Activated naive CD4-positive, alpha-beta T cell treated with anti-CD3 and anti-CD28 coated beads for 36 hours (primary cell): ENCODE measurements at regions of chr1 and their contacts with region 1.

Region 1: GRCh38 chr1:78004719-78005447 is at the start of gene DNAJB4:
- DNase-seq: peak; percentile 82
- H3K4me3 Mint-ChIP-seq: peak within 1 kb of the TSS; percentile 88
- H3K27ac Mint-ChIP-seq: peak within 1 kb of the TSS; percentile 100
- H3K4me1 Mint-ChIP-seq: peaks cover 39% of the 10 kb centered on the region
- H3K27me3 Mint-ChIP-seq: peaks cover 3% of the 10 kb centered on the region
- total RNA-seq, gene DNAJB4: 9.7 to 10.4 TPM

Region 2: GRCh38 chr1:77430966-77431690 is 573.8 kb before region 1 on chr1:
- CTCF ChIA-PET with region 1: no interaction called
- intact Hi-C with region 1: loop called (anchors 2 kb)
- DNase-seq: no peak
- H3K4me3 Mint-ChIP-seq: no peak overlapping the region
- H3K27ac Mint-ChIP-seq: no peak overlapping the region
- H3K4me1 Mint-ChIP-seq: peaks cover 28% of the 10 kb centered on the region
- H3K27me3 Mint-ChIP-seq: no peaks in the 10 kb centered on the region

Region 3: GRCh38 chr1:77779529-77780281 is 225.2 kb before region 1 on chr1 and contains the start of gene MIGA1:
- CTCF ChIA-PET with region 1: no interaction called
- intact Hi-C with region 1: loop called (anchors 1 kb)
- DNase-seq: peak; percentile 90
- H3K4me3 Mint-ChIP-seq: peak within 1 kb of the TSS; percentile 88
- H3K27ac Mint-ChIP-seq: peak within 1 kb of the TSS; percentile 85
- H3K4me1 Mint-ChIP-seq: peaks cover 34% of the 10 kb centered on the region
- H3K27me3 Mint-ChIP-seq: no peaks in the 10 kb centered on the region
- total RNA-seq, gene MIGA1: 7.7 to 8.8 TPM

Region 4: DNA sequence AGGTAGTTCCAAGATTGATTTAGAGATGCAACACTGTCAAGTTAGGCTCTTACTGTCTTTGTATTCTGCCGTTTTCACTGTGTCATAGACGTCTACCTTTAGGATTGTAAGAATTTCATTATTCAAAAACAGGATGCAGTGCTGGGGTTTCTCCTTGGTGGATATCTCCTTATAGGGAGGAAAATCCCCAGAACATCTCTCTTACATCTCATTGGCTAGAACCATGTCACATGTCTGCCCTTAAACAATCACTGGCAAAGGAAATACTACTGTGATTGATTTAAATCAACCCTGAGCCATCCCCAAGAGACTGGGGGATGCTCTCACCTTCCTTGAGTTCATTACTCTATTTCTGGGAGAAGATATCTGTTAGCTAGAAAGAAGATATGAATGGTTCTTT is 15.1 kb before region 1 on chr1:
- CTCF ChIA-PET with region 1: no interaction called
- intact Hi-C with region 1: no loop called
- DNase-seq: no peak
- H3K4me3 Mint-ChIP-seq: no peak overlapping the region
- H3K27ac Mint-ChIP-seq: no peak overlapping the region
- H3K4me1 Mint-ChIP-seq: peaks cover 39% of the 10 kb centered on the region
- H3K27me3 Mint-ChIP-seq: no peaks in the 10 kb centered on the region

Region 5: DNA sequence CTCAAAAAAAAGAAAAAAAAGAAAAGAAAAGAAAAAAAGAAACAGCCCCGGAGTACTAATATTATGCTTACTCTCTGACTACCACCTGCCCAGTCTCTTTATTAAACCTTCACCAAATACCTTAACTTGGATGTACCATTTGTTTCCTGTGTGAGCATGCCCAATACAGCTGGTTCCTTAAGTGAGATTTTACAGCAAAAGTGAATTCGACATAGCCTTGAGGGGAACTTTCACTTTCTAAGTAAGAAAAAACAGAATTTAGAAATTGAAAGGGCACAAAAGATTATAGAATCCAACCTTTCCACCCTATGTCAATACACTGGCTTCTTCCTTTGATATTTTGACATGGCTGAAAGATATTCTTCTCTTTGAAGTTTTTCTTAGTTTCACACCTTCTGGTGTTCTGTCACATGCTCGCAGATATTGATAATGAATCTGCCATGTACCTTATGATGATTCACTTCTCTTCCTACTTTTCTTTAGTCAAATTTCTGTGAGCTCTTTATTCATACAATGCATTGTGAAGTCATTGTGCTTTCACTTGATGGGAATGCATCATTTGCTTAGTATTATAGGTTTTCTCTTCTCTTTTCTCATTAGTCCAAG is 35.7 kb after region 1 on chr1:
- CTCF ChIA-PET with region 1: interaction called, 5 read pairs
- intact Hi-C with region 1: loop called (anchors 1 kb)
- DNase-seq: no peak
- H3K4me3 Mint-ChIP-seq: peak overlapping the region; percentile 57
- H3K27ac Mint-ChIP-seq: peak overlapping the region; percentile 32
- H3K4me1 Mint-ChIP-seq: peaks cover 27% of the 10 kb centered on the region
- H3K27me3 Mint-ChIP-seq: peaks cover 15% of the 10 kb centered on the region

Region 6: GRCh38 chr1:78081980-78082860 is 77.3 kb after region 1 on chr1:
- CTCF ChIA-PET with region 1: no interaction called
- intact Hi-C with region 1: loop called (anchors 1 kb)
- DNase-seq: no peak
- H3K4me3 Mint-ChIP-seq: no peak overlapping the region
- H3K27ac Mint-ChIP-seq: no peak overlapping the region
- H3K4me1 Mint-ChIP-seq: peaks cover 16% of the 10 kb centered on the region
- H3K27me3 Mint-ChIP-seq: peaks cover 4% of the 10 kb centered on the region

Region 7: DNA sequence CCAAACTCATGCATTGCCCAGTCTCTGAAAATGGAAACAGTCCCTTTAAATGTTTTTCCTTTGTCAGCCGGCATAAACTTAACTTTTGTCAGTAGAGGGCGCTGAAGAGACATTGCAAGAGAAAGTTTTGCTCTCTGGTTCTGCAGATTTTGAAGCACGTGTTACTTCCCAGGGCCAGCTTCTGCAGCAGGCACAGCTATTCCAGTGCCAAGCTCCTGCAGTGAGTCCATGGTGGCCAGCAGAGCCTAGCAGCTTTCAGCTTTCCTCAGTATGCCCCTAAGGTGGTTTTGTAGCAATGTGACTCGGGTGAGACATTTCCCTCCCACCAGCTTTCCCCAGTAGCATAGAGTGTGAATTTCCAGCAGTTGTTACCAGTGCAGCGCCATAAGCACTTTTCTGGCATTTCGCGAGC is 612.7 kb after region 1 on chr1:
- CTCF ChIA-PET with region 1: no interaction called
- intact Hi-C with region 1: loop called (anchors 1 kb)
- DNase-seq: peak; percentile 66
- H3K4me3 Mint-ChIP-seq: no peak overlapping the region
- H3K27ac Mint-ChIP-seq: no peak overlapping the region
- H3K4me1 Mint-ChIP-seq: peaks cover 30% of the 10 kb centered on the region
- H3K27me3 Mint-ChIP-seq: no peaks in the 10 kb centered on the region